Ascending aorta (tissue), 2 donors: ENCODE measurements at regions of chr17 and their contacts with region 1.

Region 1: GRCh38 chr17:45640141-45640850 is 143.8 kb upstream of the CRHR1 start:
- DNase-seq: peak in 1 of 2 donors; percentile 74
- H3K4me3 ChIP-seq: no peak overlapping the region
- H3K27ac ChIP-seq: no peak overlapping the region
- H3K4me1 ChIP-seq: no peaks in the 10 kb centered on the region
- H3K27me3 ChIP-seq: no peaks in the 10 kb centered on the region
- CTCF ChIP-seq: peak; percentile 82 to 91 (median 83)

Region 2: GRCh38 chr17:45148183-45149036 is 491.9 kb before region 1 on chr17 and contains the start of gene HEXIM1:
- intact Hi-C with region 1: no loop called
- DNase-seq: peak; percentile 98 to 100
- H3K4me3 ChIP-seq: peak within 1 kb of the TSS; percentile 73 to 90
- H3K27ac ChIP-seq: peak within 1 kb of the TSS; percentile 96 to 97
- H3K4me1 ChIP-seq: peaks cover 11 to 47% of the 10 kb centered on the region in 2 donors
- H3K27me3 ChIP-seq: no peaks in the 10 kb centered on the region
- CTCF ChIP-seq: no peak
- total RNA-seq, gene HEXIM1: 23.7 TPM

Region 3: DNA sequence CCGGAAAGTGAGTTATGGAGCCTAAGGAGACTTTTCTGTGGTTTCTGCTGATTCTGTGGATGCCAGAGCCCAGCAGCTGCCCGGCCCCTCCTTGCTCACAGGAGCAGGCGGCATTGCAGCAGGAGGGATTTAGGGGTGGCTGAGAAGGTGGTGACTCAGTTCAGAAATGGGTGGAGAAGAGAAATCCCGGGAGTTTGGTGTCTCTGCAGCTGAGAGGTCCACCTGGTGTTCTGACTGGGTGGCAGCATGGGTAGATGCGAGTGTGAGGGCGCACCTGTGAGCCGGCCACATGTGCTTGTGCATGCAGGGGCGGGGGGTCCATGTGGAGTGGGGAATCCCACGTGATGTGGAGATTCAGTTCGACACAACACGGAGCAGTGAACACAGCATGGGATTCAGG is 188.3 kb after region 1 on chr17:
- intact Hi-C with region 1: loop called (anchors 1 kb)
- DNase-seq: no peak
- H3K4me3 ChIP-seq: no peak overlapping the region
- H3K27ac ChIP-seq: no peak overlapping the region
- H3K4me1 ChIP-seq: no peaks in the 10 kb centered on the region
- H3K27me3 ChIP-seq: no peaks in the 10 kb centered on the region
- CTCF ChIP-seq: no peak

Region 4: DNA sequence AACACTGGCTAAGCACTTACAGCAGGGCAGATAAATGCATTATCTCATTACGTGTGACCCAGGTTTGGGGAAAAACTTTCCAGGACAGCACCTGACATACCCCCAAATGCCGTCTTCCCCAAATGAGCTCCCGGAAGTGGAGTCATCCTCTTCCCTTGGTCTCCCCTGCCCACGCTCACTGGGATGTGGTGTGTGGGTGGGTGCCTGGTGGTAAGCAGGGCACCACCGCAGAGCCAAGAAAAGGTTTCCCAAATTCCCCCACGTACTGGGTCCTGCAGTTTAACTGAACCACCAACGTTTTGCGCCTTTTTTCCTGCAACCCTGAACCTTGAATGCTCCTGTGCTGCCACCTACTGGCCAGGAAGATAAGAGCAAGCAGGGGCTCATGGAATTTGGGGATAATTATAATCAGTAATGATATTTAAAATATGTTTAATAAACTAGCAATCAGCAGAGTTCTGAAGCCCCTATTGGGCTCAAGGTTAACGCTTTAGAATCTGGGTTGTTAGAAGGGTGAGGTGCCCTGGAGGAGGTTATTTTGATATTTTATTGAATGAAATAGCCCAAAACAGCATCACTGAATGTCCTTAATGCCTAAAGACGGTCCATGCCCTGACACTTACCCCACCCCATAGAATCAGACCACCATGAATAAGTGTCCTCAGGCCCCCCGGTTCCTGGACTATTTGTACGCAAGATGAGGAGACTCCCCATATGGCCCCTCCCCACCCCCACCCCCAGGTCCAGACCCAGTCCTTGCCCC is 212.4 kb after region 1 on chr17:
- intact Hi-C with region 1: loop called (anchors 5 kb)
- DNase-seq: peak in 1 of 2 donors; percentile 70
- H3K4me3 ChIP-seq: no peak overlapping the region
- H3K27ac ChIP-seq: no peak overlapping the region
- H3K4me1 ChIP-seq: no peaks in the 10 kb centered on the region
- H3K27me3 ChIP-seq: no peaks in the 10 kb centered on the region
- CTCF ChIP-seq: peak; percentile 63 to 88 (median 78)